Activated CD4-positive, alpha-beta memory T cell treated with anti-CD3 and anti-CD28 coated beads for 36 hours (primary cell): ENCODE measurements at regions of chr11 and their contacts with region 1.

Region 1: DNA sequence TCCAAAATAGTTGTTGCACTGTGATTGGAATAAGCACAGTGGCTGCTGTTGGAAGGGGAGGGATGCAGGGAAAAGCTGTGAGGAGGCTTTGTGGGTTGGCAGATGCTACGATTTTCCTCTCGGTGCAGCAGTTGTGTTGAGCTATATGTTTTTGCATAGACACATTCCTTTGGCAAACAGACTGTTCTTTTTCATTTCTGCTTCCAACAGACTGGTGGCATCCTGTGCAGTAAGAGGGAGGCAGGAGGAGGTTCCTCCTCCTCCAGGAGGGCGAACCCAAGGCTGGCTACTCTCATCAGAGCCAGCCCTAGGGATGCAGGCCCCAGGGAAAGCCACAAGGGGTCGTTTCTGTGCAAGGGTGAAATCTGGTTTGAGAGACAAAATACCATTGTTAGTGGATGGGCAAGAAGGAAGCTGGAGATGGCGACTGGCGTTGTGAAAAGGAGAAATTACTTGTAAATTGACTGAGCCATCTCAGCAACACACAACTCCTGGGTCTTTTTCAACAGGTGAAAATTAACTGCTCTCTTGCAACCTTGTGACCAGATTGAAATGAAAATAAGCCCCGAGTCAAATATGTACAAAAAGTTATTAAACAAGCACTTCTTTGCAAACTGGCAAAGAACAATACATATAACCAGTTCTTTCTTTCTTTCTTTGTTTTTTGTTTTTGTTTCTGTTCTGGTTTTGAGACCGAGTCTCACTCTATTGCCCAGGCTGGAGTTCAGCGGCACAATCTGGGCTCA is 26.5 kb upstream of the UBASH3B start:
- DNase-seq: peak; percentile 79
- H3K4me3 Mint-ChIP-seq: no peak overlapping the region
- H3K27ac Mint-ChIP-seq: no peak overlapping the region
- H3K4me1 Mint-ChIP-seq: peaks cover 6% of the 10 kb centered on the region
- H3K27me3 Mint-ChIP-seq: peaks cover 1% of the 10 kb centered on the region

Region 2: DNA sequence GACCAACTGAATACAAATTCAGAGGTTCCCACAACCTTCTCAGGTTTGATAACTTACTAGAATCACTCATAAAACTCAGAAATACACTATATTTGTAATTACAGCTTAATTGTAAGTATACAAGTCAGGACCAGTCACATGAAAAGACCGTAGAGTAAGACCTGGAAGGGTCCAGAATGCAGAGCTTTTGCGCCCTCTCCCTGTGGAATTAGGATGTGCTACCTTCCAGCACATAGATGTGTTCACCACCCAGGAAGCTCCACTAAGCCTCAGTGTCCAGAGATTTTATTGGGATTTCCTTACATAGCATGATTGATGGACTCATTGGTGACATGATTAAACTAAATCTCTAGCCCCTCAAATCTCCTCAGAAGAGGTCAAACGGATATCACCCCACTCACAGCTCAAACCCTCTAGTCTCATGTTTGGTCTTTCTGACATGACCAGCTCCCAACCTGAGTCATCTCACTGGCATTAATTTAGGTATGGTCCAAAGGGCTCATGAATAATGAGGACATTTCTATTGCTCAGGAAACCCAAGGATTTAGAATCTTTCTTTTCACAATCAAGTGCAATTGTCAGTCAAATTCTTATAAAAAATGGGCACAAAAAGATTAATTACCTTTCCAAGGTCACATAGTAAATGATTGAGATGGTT is 50.7 kb before region 1 on chr11:
- CTCF ChIA-PET with region 1: interaction called, 6 read pairs
- POLR2A ChIA-PET with region 1: no interaction called
- intact Hi-C with region 1: loop called (anchors 2 kb)
- DNase-seq: no peak
- H3K4me3 Mint-ChIP-seq: no peak overlapping the region
- H3K27ac Mint-ChIP-seq: no peak overlapping the region
- H3K4me1 Mint-ChIP-seq: peaks cover 8% of the 10 kb centered on the region
- H3K27me3 Mint-ChIP-seq: peaks cover 2% of the 10 kb centered on the region

Region 3: DNA sequence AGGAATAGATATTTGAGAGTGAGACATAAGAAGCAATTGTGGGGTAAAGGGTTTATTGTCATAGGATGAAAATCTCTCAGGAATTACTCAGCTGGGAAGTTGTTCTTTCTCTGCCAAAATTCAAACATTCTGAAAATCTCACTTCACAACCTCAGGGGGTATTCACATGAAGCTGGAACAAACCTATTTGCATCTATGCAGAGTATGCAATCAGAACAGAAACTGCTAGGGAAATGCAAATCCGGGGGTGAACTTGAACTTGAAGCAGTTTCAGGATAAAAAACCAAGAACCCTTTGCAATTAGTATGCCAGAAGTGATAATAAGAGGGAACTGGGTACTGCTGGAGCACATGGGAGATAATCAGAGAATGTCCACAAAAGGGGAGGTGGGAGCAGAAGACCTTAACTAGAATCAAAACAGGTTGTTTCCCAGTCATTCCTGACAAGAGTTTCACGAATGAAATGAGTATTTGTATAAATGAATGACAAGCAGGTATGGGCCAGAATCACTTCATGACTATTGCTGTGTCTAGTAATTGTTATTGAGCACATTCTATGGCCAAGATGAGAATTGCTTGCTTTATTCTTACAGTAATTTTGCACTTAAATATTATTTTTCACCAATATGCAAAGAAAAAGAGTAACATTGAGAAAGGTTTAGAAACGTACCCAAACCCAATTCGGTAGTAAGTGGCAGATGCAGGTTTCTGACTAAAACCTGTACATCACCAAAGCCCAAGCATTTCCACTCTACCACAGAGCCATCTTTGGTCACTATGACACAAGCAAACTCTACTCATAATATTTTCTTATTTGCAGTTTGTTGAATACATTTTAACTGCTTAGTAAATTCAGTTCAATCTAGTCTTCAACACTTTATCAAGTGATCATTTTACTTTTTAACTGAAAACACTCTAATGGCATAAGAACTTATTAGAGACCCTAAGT is 35.2 kb before region 1 on chr11:
- CTCF ChIA-PET with region 1: no interaction called
- POLR2A ChIA-PET with region 1: no interaction called
- intact Hi-C with region 1: no loop called
- DNase-seq: no peak
- H3K4me3 Mint-ChIP-seq: no peak overlapping the region
- H3K27ac Mint-ChIP-seq: no peak overlapping the region
- H3K4me1 Mint-ChIP-seq: peaks cover 8% of the 10 kb centered on the region
- H3K27me3 Mint-ChIP-seq: peaks cover 27% of the 10 kb centered on the region

Region 4: DNA sequence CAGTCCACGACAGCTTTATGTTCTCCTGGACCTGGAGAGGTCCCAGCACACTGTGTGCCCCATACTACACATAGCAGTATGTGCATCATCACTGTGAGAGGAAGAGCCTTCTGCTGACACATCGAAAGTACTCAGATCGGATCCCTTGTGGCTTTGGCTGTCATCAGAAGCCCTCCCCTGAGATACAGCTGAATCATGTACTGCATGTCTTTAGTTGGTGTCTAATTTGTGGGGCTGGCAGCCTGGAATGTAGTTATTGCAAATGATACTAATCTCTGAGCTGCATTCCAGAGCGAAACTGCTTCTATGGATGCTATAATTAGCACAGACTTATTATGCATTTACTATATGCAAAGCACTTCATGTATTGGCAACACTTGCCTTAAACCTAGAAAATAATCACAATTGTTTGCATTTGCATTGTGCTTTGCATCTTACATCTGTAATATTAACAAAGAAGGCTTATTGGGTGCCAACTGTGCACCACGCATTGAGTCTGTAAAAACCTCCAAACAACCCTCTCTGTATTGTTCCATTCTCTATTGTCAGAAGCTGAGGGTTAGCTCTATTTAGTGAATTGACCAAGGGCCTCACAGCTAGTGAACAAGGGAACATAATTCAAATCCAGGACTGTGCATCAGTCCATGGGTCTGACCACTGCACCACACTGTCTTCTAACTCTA is 120.2 kb after region 1 on chr11:
- CTCF ChIA-PET with region 1: interaction called, 64 read pairs
- POLR2A ChIA-PET with region 1: no interaction called
- intact Hi-C with region 1: loop called (anchors 1 kb)
- DNase-seq: peak; percentile 83
- H3K4me3 Mint-ChIP-seq: no peak overlapping the region
- H3K27ac Mint-ChIP-seq: no peak overlapping the region
- H3K4me1 Mint-ChIP-seq: peaks cover 33% of the 10 kb centered on the region
- H3K27me3 Mint-ChIP-seq: no peaks in the 10 kb centered on the region

Region 5: GRCh38 chr11:122788781-122789535 is 160.0 kb after region 1 on chr11:
- CTCF ChIA-PET with region 1: interaction called, 119 read pairs
- POLR2A ChIA-PET with region 1: no interaction called
- intact Hi-C with region 1: no loop called
- DNase-seq: no peak
- H3K4me3 Mint-ChIP-seq: no peak overlapping the region
- H3K27ac Mint-ChIP-seq: no peak overlapping the region
- H3K4me1 Mint-ChIP-seq: no peaks in the 10 kb centered on the region
- H3K27me3 Mint-ChIP-seq: no peaks in the 10 kb centered on the region